ENCODE measurements at regions of chr3 and their contacts with region 1.

Region 1: DNA sequence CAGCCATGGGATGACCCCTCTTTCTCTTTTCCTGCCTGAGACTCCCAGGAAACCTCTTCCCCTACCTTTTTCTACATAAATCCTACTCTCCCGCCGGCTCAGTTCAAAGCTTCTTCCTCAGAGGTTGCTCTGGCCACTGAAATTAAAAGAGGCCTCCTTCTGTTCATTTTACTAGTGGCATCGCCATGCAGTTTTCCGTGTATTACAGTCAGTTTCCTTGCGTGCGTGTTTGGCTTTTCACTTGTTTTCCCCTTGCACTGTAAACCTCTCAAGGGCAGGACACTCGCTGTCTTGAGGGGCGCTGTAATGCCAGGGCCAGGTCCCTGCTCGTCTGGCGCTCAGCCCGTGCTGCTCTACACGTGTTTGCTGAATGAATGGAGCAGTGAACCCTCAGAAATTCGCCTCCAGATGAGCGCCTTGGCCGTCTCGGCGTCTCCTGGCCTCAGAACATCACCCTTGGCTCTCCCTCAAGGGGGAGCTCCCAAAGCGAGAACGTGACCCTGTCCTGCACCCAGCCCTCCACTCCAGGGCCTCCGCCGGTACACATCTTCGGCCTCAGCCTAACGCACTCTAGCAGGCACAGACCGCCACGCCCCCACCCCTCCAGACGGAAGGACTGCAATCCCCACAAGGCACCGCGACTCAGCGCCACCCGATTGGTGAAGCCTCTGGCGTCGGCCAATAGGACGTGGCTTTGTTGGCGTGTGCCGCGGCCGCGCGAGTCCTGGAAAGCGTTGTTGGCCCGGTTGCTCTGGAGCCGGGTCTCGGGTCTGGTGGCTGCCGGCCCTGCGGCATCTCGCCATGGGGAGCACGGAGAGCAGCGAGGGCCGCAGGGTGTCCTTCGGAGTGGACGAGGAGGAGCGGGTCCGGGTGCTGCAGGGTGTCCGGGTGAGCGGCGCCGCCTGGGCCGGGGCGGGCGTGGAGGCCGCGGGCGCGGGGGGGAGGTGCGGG is at the start of gene CHCHD6:
- DNase-seq: peak; percentile 94
- ATAC-seq: peak; percentile 96
- H3K4me3 Mint-ChIP-seq: peak within 1 kb of the TSS; percentile 99
- H3K27ac Mint-ChIP-seq: peak within 1 kb of the TSS; percentile 74
- H3K4me1 Mint-ChIP-seq: peaks cover 17% of the 10 kb centered on the region
- H3K27me3 Mint-ChIP-seq: peaks cover 32% of the 10 kb centered on the region
- CTCF ChIP-seq: no peak
- total RNA-seq, gene CHCHD6: 7.5 and 10.0 TPM in 2 replicates

Region 2: DNA sequence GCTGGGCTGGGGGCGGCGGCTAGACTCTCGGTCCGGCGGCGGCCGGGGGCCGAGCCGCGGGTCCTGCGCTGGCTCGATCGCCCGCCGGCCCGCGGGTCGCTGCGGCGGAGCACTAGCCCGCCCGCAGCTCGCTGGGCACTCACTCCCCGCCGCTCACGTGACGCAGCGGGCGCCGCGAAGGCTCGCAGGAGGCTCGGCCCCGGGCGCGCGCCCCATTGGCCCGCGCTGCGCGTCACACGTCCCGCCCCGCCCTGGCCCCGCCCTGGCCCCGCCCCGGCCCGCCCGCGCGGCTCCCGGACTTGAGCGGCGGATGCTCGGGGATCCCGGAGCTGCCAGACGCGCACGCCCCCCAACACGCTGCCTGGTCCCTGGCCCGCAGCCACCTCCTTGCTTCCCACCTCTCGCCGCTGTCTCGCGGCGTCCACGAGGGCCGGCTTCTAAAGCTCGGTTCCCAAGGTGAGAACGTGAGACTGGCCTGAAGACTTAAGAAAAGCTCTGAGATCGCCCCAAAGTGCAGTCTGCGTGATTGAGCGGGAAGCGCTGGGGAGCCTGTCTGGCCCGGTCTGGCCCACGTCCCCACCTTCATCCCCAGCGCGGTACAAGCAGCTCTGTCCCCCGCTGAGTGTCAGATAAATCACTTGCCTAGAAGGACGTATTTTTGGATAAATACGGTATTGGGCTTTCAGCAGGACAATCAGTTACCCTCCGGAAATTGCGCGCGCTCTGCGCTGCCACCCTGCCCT is 346.3 kb before region 1 on chr3 and contains the start of gene KLF15:
- CTCF ChIA-PET with region 1: no interaction called
- POLR2A ChIA-PET with region 1: no interaction called
- intact Hi-C with region 1: loop called (anchors 2 kb)
- DNase-seq: peak; percentile 76
- ATAC-seq: peak; percentile 93
- H3K4me3 Mint-ChIP-seq: peak within 1 kb of the TSS; percentile 88
- H3K27ac Mint-ChIP-seq: no peak within 1 kb of the TSS
- H3K4me1 Mint-ChIP-seq: peaks cover 16% of the 10 kb centered on the region
- H3K27me3 Mint-ChIP-seq: peaks cover 35% of the 10 kb centered on the region
- CTCF ChIP-seq: no peak
- total RNA-seq, gene KLF15: 0.31 and 0.39 TPM in 2 replicates